Posterior vena cava (tissue), 2 donors: ENCODE measurements at regions of chr20 and their contacts with region 1.

Region 1: GRCh38 chr20:35994994-35995453 is 26.6 kb downstream of the CNBD2 start:
- DNase-seq: peak; percentile 92

Region 2: DNA sequence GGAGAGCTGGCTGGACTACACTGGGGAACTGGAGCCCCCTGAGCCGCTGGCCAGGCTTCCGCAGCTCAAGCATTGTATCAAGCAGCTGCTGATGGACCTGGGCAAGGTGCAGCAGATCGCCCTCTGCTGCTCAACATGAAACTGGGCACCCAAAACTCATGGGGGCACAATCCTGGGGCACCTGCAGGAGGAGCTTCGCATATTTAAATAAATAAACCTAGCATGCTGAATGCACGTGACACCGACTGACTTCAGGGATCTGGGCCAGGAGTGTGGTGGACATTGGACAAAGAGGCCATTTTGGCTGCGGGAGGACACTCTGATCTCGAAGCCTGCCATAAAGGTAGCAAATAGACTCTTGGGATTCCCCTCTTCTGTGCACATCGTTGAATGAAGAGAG is 47.5 kb before region 1 on chr20:
- intact Hi-C with region 1: no loop called
- DNase-seq: no peak

Region 3: GRCh38 chr20:36145877-36146707 is 151.1 kb after region 1 on chr20:
- intact Hi-C with region 1: loop called in 1 of 2 experiments (anchors 2 kb)
- DNase-seq: no peak